AG04450 (cell line): ENCODE measurements at regions of chr1 and their contacts with region 1.

Region 1: DNA sequence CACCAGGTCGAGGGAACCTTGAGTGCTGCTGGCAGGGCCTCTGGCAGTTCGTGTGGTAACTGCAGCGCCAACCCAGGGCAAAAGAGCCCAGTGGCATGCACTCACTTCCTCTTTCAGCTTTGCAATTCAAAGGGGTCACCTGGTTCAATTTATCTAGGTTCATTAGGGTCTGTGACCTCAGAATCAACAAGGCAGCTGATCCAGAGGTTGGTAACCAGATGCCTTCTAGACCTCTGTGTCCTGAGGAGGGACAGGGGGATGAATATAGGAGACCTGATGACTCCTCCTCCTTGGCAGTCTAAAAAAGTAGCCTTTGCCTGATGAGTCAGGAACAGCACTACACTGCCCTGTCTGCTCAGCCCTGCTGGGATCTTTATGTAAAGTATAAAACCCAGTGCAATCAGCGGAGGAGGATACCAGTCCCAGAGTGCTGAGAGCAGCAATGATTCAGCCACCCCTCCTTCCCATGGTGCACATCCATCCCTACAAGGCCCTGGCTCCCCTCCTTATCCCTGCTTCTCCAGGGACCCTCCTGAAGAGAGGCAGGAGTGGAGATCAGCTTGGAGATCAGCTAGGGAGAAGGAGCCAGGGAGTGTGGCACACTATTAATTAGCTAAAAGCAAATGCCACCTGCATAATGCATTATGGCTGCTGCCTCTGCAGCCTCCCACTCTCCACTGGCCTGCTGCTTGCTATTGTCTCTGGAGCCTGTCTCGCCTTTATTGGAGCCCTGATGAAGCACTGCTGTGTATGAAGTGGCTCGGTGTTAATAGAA is 11.2 kb upstream of the FMOD start:
- DNase-seq: no peak
- H3K4me3 ChIP-seq: no peak overlapping the region
- H3K27ac ChIP-seq: no peak overlapping the region
- H3K27me3 ChIP-seq: peaks cover 24% of the 10 kb centered on the region
- CTCF ChIP-seq: no peak

Region 2: DNA sequence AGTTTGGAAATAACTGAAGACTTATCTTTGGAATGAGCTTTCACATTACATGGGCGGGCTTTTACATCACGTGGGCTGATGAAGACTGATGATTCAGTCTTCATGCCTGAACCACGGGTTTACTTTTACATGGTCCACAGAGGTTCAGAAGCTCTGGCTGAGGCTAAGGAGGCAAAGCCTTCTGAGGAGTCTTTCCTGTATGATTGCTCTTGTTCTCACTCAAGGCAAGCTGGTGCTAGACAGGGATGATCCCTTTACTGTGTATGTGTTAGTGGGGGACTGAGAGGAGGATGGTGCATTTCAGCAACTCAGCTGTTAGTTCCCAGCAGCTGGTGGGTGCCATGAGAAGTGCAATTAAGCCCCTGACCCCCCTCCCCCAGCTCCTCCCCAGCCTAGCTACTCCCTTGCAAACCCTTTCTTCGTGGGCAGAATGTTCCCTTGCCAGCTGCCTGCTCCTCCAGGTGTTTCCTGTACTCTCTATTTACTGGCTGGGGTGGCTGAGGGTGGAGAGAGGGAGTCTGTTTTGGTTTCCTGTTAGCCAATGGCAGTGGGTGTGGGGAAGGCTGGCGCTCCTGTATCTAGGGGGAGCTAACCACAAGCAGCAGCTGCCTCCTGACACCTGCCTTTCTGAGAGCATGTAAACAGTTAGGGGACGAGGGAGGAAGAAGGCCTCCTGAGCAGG is 41.4 kb before region 1 on chr1:
- CTCF ChIA-PET with region 1: interaction called, 15 read pairs
- POLR2A ChIA-PET with region 1: no interaction called
- DNase-seq: no peak
- H3K4me3 ChIP-seq: no peak overlapping the region
- H3K27ac ChIP-seq: peak overlapping the region; percentile 39
- H3K27me3 ChIP-seq: peaks cover 62% of the 10 kb centered on the region
- CTCF ChIP-seq: no peak

Region 3: GRCh38 chr1:203331224-203331623 is 30.9 kb before region 1 on chr1:
- CTCF ChIA-PET with region 1: no interaction called
- POLR2A ChIA-PET with region 1: no interaction called
- DNase-seq: no peak
- H3K4me3 ChIP-seq: no peak overlapping the region
- H3K27ac ChIP-seq: no peak overlapping the region
- H3K27me3 ChIP-seq: peaks cover 32% of the 10 kb centered on the region
- CTCF ChIP-seq: no peak